ENCODE measurements at regions of chr19 and their contacts with region 1.

Region 1: GRCh38 chr19:38335949-38336637 is 463 bp downstream of the CATSPERG start:
- DNase-seq: peak; percentile 92 to 98 (median 94)
- ATAC-seq: peak; percentile 92
- H3K4me3 ChIP-seq: peak overlapping the region; percentile 85
- H3K27ac ChIP-seq: peak overlapping the region; percentile 88
- H3K4me1 ChIP-seq: peaks cover 13 to 34% of the 10 kb centered on the region in 2 experiments; a peak in 4 of 5 replicates
- H3K27me3 ChIP-seq: no peaks in the 10 kb centered on the region
- CTCF ChIP-seq: no peak
- EP300 ChIP-seq: no peak
- POLR2A ChIP-seq: peak; percentile 74
- RAD21 ChIP-seq: no peak

Region 2: DNA sequence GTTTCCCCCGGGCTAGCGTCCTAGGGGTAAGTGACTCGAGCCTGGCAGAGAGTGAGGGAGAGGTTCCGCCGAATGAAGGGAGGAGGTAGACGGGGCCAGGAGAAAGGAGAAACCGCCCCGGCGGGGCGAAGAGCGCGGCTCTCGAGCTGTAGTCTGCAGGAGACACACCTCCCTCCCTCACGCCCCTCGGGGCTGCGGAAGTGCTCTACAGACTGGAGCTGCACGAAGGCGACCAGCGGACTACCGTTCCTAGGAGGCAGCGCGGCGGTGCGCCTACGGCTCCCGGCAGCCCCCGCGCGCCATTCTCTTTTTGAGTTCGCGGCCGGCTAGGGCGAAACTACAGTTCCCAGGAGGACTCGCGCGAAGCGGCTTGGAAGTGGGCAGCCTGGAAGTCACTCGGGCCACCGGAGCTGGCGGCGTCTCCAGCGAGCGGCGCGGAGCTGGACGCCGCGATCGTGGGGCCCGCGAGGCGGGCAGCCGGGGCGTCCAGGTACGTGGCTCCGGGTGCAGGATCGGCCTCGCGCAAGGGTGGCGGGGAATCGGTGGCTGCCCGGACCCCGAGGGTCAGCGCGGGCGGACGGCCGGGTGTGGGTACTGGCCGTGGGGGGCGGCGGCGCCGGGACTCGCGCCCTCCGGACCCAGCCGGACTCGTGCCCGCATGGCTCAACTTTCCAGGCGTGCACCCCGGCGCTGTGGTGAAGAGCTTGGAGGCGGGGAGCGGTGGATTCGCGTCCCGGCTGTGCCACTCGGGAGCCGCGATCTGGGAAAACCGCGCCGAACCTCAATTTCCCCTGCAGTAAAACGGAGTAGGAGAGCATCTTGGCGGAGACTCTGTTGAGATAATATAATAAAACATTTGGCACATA is 429.0 kb before region 1 on chr19 and contains the start of gene SIPA1L3:
- CTCF ChIA-PET with region 1: interaction called, 5 read pairs
- POLR2A ChIA-PET with region 1: interaction called, 4 read pairs
- in situ Hi-C with region 1: loop called (anchors 25 kb)
- intact Hi-C with region 1: loop called (anchors 2 kb)
- DNase-seq: peak; percentile 86 to 97 (median 88)
- ATAC-seq: peak; percentile 99
- H3K4me3 ChIP-seq: peak within 1 kb of the TSS; percentile 94
- H3K27ac ChIP-seq: peak within 1 kb of the TSS; percentile 39; the same call in 2 of the 3 replicates
- H3K4me1 ChIP-seq: peaks cover 6 to 13% of the 10 kb centered on the region in 2 experiments; a peak in 3 of 5 replicates
- H3K27me3 ChIP-seq: no peaks in the 10 kb centered on the region
- CTCF ChIP-seq: no peak
- EP300 ChIP-seq: no peak
- POLR2A ChIP-seq: no peak
- RAD21 ChIP-seq: no peak
- polyA plus RNA-seq, gene SIPA1L3: 0.01 to 0.15 TPM

Region 3: DNA sequence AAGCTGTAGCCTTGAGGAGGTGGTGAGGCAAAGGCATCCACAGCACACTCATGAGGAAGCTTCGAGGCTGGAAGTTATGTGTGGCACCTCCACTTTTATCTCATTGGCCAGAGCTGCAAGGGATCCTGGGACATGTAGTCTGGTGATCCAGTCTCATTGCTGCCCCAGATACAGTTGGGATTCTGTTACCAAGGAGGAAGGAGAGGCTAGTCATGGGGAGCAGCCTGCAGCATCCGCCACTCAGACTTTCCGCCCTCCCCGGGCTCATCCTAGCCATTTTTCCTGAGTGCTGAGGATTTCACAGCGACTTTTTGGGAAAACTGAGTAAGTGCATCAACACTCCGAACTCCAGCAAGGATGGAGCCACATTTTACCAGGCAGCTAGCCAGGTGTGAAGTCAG is 186.4 kb before region 1 on chr19:
- CTCF ChIA-PET with region 1: no interaction called
- POLR2A ChIA-PET with region 1: no interaction called
- in situ Hi-C with region 1: loop called (anchors 5 kb)
- intact Hi-C with region 1: no loop called
- DNase-seq: peak; percentile 39 to 51 (median 44)
- ATAC-seq: peak; percentile 68
- H3K4me3 ChIP-seq: no peak overlapping the region
- H3K27ac ChIP-seq: no peak overlapping the region
- H3K4me1 ChIP-seq: peaks cover 15 to 17% of the 10 kb centered on the region in 2 experiments; a peak in 4 of 5 replicates
- H3K27me3 ChIP-seq: no peaks in the 10 kb centered on the region
- CTCF ChIP-seq: no peak
- EP300 ChIP-seq: no peak
- POLR2A ChIP-seq: no peak
- RAD21 ChIP-seq: no peak

Region 4: DNA sequence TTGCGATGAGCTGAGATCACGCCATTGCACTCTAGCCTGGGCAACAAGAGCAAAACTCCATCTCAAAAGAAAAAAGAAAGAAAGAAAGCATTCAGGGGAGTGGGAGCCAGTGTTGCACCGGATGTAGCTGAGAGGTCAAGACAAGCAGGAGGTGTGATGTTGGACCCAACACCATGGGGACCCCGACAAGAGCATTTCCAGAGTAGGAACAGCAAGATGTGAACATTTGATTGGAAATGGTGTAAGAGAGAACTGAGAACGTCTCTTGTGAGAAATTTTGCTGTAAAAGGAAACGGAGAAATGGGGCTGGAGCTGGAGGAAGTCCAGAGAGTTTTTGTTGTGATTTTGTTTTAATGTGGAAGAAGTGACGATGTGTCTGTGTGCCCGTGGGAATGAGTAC is 96.3 kb before region 1 on chr19:
- CTCF ChIA-PET with region 1: interaction called, 41 read pairs
- POLR2A ChIA-PET with region 1: no interaction called
- in situ Hi-C with region 1: loop called (anchors 5 kb)
- intact Hi-C with region 1: loop called (anchors 1 kb)
- DNase-seq: no peak
- ATAC-seq: no peak
- H3K4me3 ChIP-seq: no peak overlapping the region
- H3K27ac ChIP-seq: no peak overlapping the region
- H3K4me1 ChIP-seq: peaks cover 5 to 18% of the 10 kb centered on the region in 2 experiments; a peak in 4 of 5 replicates
- H3K27me3 ChIP-seq: no peaks in the 10 kb centered on the region
- CTCF ChIP-seq: no peak
- EP300 ChIP-seq: no peak
- POLR2A ChIP-seq: no peak
- RAD21 ChIP-seq: no peak

Region 5: GRCh38 chr19:38284422-38284821 is 51.7 kb before region 1 on chr19:
- CTCF ChIA-PET with region 1: no interaction called
- POLR2A ChIA-PET with region 1: no interaction called
- in situ Hi-C with region 1: no loop called
- intact Hi-C with region 1: no loop called
- DNase-seq: no peak
- ATAC-seq: no peak; the same call in 2 of the 3 replicates
- H3K4me3 ChIP-seq: no peak overlapping the region
- H3K27ac ChIP-seq: no peak overlapping the region
- H3K4me1 ChIP-seq: peaks cover 10 to 15% of the 10 kb centered on the region in 2 experiments; a peak in 4 of 5 replicates
- H3K27me3 ChIP-seq: no peaks in the 10 kb centered on the region
- CTCF ChIP-seq: no peak
- EP300 ChIP-seq: no peak
- POLR2A ChIP-seq: no peak
- RAD21 ChIP-seq: no peak

Region 6: DNA sequence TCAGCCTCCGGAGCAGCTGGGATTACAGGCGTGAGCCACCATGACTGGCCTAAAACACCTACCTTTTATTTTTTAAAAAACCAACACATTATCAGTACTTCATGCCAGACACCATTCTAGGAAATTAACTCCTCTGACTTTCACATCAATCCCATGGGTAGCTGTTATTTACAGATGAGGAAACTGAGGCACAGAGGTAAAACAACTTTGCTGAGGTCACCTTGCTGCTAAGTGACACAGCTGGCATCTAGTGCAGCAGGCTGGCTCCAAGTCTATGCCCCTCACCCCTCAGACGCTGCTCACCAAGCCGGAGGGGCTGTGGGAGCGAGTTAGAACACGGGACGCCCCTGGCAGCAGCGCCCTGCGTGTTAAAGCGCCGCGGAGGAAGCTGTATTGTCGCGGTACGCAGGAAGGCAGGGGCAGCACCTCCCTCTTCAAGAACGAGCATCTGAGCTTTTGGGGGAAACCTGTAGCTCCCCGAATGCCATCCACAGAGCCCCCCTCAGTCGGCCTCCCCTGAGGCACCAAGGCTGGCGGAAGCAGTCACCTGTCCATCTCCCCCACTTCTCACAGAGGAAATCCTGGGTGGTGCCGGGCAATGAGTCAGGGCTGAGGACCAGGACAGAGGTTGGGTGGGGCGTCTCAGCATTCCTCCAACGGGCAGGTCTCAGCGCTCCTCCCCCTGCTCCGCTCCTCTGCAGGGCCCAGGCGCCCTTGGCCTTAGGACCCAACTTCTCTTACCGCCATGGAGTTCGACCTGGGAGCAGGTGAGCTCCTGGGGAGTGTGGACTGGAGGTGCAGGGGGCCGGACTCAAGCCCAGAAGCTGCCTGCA is 32.4 kb before region 1 on chr19 and contains the start of gene C19orf33:
- CTCF ChIA-PET with region 1: no interaction called
- POLR2A ChIA-PET with region 1: no interaction called
- in situ Hi-C with region 1: no loop called
- intact Hi-C with region 1: loop called (anchors 2 kb)
- DNase-seq: peak in 2 of 4 experiments; percentile 36 to 47
- ATAC-seq: peak; percentile 10
- H3K4me3 ChIP-seq: no peak within 1 kb of the TSS
- H3K27ac ChIP-seq: no peak within 1 kb of the TSS
- H3K4me1 ChIP-seq: peaks cover 22 to 57% of the 10 kb centered on the region in 2 experiments
- H3K27me3 ChIP-seq: no peaks in the 10 kb centered on the region
- CTCF ChIP-seq: no peak
- EP300 ChIP-seq: no peak
- POLR2A ChIP-seq: no peak
- RAD21 ChIP-seq: no peak
- polyA plus RNA-seq, gene C19orf33: not detected

Region 7: GRCh38 chr19:38374429-38375176 is 38.5 kb after region 1 on chr19 and contains the start of gene PSMD8:
- CTCF ChIA-PET with region 1: interaction called, 3 read pairs
- POLR2A ChIA-PET with region 1: interaction called, 3 read pairs
- in situ Hi-C with region 1: no loop called
- intact Hi-C with region 1: loop called (anchors 1 kb)
- DNase-seq: peak; percentile 97 to 100 (median 98)
- ATAC-seq: peak; percentile 99
- H3K4me3 ChIP-seq: peak within 1 kb of the TSS; percentile 88
- H3K27ac ChIP-seq: peak within 1 kb of the TSS; percentile 94
- H3K4me1 ChIP-seq: peaks cover 10 to 20% of the 10 kb centered on the region in 2 experiments; a peak in 4 of 5 replicates
- H3K27me3 ChIP-seq: no peaks in the 10 kb centered on the region
- CTCF ChIP-seq: peak; percentile 45 to 59 (median 56); a peak in 5 of 6 replicates
- EP300 ChIP-seq: peak; percentile 76
- POLR2A ChIP-seq: peak; percentile 99
- RAD21 ChIP-seq: no peak
- polyA plus RNA-seq, gene PSMD8: 130 to 244 TPM